ENCODE measurements at regions of chr1 and their contacts with region 1.

Region 1: GRCh38 chr1:161117759-161118581 is at the starts of genes NIT1 and PFDN2:
- DNase-seq: peak; percentile 77 to 80 (median 78)
- H3K4me3 ChIP-seq: peak within 1 kb of the TSS; percentile 71 to 100 (median 86)
- H3K4me3 Mint-ChIP-seq: peak within 1 kb of the TSS; percentile 90 to 95
- H3K27ac ChIP-seq: peak within 1 kb of the TSS; percentile 89 to 99
- H3K27ac Mint-ChIP-seq: peak within 1 kb of the TSS; percentile 89 to 98 (median 94)
- H3K4me1 ChIP-seq: peaks cover 72 to 92% of the 10 kb centered on the region in 2 donors
- H3K4me1 Mint-ChIP-seq: peaks cover 90% of the 10 kb centered on the region
- H3K27me3 ChIP-seq: no peaks in the 10 kb centered on the region
- H3K27me3 Mint-ChIP-seq: no peaks in the 10 kb centered on the region
- CTCF ChIP-seq: no peak
- polyA plus RNA-seq, gene NIT1: 28.4 to 84.7 (median 35.7) TPM
- polyA plus RNA-seq, gene PFDN2: 59.1 to 80.7 (median 65.6) TPM

Region 2: DNA sequence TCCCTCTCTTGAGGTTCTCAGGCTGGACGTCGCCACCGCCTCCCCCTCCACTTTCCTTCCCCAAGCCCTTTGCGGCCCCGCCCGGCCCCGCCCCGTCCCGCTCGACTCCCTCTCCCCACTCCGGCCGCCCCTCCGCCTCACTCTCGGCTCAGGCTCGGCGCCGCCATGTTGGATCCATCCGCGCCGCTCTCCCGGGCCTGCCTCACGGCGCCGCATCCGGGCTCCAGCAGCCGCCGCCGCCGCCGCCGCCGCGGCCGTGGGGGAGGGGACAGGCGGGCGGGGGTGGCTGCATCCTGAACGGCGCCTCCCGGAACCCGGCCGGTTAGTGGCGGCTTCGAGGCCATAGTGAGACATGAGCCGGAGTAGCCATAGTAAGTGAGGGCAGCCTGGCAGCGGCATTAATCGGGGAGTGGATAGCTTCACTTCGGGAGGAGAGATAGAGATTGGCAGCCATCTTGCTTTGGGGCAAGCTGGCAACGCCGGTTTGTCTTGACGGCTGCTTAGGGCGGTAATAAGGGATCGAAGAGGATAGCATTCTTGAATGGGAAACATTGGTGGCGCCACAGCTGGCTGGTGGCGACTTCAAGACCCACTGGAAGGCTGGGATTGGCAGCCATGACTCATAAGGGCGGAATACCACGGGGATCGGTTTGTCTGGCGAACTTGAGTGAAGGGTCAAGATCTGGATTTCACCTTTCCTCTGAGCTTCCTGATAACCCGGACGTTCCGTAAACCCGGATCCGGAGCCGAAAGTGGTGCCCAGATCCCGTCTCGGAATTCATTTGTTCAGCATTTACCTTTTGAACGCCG is 14.6 kb after region 1 on chr1 and contains the start of gene DEDD:
- intact Hi-C with region 1: loop called in 1 of 2 experiments (anchors 2 kb)
- DNase-seq: peak; percentile 89 to 93 (median 93)
- H3K4me3 ChIP-seq: peak within 1 kb of the TSS; percentile 81 to 98 (median 95)
- H3K4me3 Mint-ChIP-seq: no peak within 1 kb of the TSS
- H3K27ac ChIP-seq: peak within 1 kb of the TSS; percentile 94 to 95
- H3K27ac Mint-ChIP-seq: peak within 1 kb of the TSS in 4 of 7 donors; percentile 84 to 96 (median 89)
- H3K4me1 ChIP-seq: peaks cover 54 to 72% of the 10 kb centered on the region in 2 donors
- H3K4me1 Mint-ChIP-seq: peaks cover 65% of the 10 kb centered on the region
- H3K27me3 ChIP-seq: no peaks in the 10 kb centered on the region
- H3K27me3 Mint-ChIP-seq: peaks cover 0 to 2% (median 0%) of the 10 kb centered on the region in 3 donors
- CTCF ChIP-seq: no peak
- polyA plus RNA-seq, gene DEDD: 40.9 to 56.3 (median 42.2) TPM

Region 3: DNA sequence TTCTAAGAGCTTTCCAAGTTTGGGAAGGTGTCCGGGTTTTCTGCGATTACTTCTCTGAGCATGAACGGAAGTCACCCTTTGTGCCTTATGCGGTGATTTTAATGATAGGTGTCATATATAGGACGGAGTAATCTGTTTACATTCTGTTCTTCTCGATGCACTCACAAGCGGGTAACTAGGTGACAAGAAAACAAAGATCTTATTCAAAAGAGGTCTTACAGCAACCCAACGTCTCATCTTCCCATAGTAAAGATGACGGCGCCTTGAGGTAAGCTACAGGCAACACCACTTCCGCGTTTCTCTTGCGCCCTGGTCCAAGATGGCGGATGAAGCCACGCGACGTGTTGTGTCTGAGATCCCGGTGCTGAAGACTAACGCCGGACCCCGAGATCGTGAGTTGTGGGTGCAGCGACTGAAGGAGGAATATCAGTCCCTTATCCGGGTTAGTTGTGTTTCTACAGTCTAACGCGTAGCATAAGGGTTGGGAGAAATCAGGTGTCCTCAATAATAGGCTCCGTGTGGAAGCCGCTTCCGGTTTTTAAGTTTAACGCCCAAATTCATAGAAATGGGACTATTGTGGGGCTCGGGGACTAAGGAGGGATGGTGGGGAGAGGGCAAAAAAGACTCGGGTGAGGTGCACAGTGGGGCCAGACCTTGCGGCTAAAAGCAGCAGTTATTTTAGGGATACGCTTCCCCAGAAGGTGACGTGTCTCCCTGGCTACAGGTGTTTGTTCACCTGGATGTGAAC is 35.9 kb after region 1 on chr1 and contains the start of gene UFC1:
- intact Hi-C with region 1: loop called in 1 of 2 experiments (anchors 5 kb)
- DNase-seq: peak; percentile 87 to 92 (median 91)
- H3K4me3 ChIP-seq: peak within 1 kb of the TSS; percentile 80 to 98 (median 95)
- H3K4me3 Mint-ChIP-seq: peak within 1 kb of the TSS; percentile 94 to 98
- H3K27ac ChIP-seq: peak within 1 kb of the TSS; percentile 96 to 98
- H3K27ac Mint-ChIP-seq: peak within 1 kb of the TSS; percentile 98 to 100 (median 100)
- H3K4me1 ChIP-seq: peaks cover 16 to 22% of the 10 kb centered on the region in 2 donors
- H3K4me1 Mint-ChIP-seq: peaks cover 24% of the 10 kb centered on the region
- H3K27me3 ChIP-seq: no peaks in the 10 kb centered on the region
- H3K27me3 Mint-ChIP-seq: no peaks in the 10 kb centered on the region
- CTCF ChIP-seq: no peak
- polyA plus RNA-seq, gene UFC1: 100 to 120 (median 108) TPM